IMR-90 (cell line): ENCODE measurements at regions of chr17 and their contacts with region 1.

Region 1: DNA sequence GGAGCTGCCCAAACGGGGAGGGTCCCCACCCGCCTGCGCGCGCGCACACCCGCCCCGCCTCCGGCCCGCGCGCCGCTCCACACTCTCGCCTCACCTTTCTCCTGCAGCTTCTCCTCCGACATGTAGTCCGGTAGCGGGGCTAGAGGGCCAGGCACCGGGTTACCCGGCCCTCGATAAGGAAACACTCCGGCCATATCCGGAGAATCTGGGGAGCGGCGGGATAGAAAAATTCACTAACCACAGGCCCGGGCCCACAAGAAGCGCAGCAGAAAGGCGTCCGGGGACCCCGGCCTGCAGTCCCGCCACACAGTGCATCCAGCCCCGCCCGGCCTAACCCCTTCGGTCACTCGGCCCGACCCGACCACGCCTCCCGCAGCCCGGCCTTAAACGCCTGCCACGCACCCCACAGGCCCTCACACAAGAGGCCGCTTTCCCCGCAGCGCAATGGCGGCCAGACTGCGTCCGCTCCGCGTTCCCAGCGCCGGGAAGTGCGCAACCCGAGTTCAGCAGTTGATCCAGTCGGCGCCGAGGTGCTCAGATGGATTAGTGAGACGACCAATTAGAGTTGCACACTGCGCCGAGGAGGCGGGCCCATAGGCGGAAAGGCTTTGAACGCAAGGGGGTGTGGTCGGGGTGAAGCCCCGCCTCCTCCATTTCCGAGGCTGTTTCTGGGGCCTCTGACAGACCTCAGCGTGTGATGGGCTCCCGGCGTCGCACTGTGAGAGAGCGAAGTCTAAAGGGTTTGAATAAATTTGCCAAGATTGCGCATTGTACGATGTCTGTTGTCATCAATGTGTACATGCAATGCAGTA is at the start of gene PRPF8:
- DNase-seq: peak; percentile 96
- ATAC-seq: peak; percentile 99
- H3K4me3 ChIP-seq: peak within 1 kb of the TSS; percentile 61
- H3K27ac ChIP-seq: peak within 1 kb of the TSS; percentile 85
- H3K4me1 ChIP-seq: peaks cover 3% of the 10 kb centered on the region
- H3K27me3 ChIP-seq: no peaks in the 10 kb centered on the region
- CTCF ChIP-seq: no peak
- POLR2A ChIP-seq: peak; percentile 82
- RAD21 ChIP-seq: no peak
- total RNA-seq, gene PRPF8: 113 and 141 TPM in 2 replicates

Region 2: GRCh38 chr17:1658100-1658499 is 26.5 kb before region 1 on chr17:
- CTCF ChIA-PET with region 1: no interaction called
- POLR2A ChIA-PET with region 1: no interaction called
- dilution Hi-C with region 1: no loop called
- in situ Hi-C with region 1: no loop called
- intact Hi-C with region 1: no loop called
- DNase-seq: no peak
- ATAC-seq: no peak
- H3K4me3 ChIP-seq: no peak overlapping the region
- H3K27ac ChIP-seq: no peak overlapping the region
- H3K4me1 ChIP-seq: no peaks in the 10 kb centered on the region
- H3K27me3 ChIP-seq: no peaks in the 10 kb centered on the region
- CTCF ChIP-seq: no peak
- POLR2A ChIP-seq: no peak
- RAD21 ChIP-seq: no peak

Region 3: GRCh38 chr17:1673041-1673785 is 11.4 kb before region 1 on chr17:
- CTCF ChIA-PET with region 1: interaction called, 10 read pairs
- POLR2A ChIA-PET with region 1: interaction called, 4 read pairs
- dilution Hi-C with region 1: no loop called
- in situ Hi-C with region 1: no loop called
- intact Hi-C with region 1: no loop called
- DNase-seq: no peak
- ATAC-seq: no peak
- H3K4me3 ChIP-seq: no peak overlapping the region
- H3K27ac ChIP-seq: no peak overlapping the region; the same call in 1 of the 2 replicates
- H3K4me1 ChIP-seq: peaks cover 3% of the 10 kb centered on the region; the same call in 1 of the 2 replicates
- H3K27me3 ChIP-seq: no peaks in the 10 kb centered on the region
- CTCF ChIP-seq: no peak
- POLR2A ChIP-seq: no peak
- RAD21 ChIP-seq: no peak